Activated CD4-positive, alpha-beta T cell treated with anti-CD3 and anti-CD28 coated beads for 36 hours (primary cell): ENCODE measurements at regions of chr7 and their contacts with region 1.

Region 1: GRCh38 chr7:46288861-46289260 is 367.8 kb upstream of the IGFBP3 start:
- DNase-seq: no peak
- ATAC-seq: no peak
- H3K4me3 Mint-ChIP-seq: no peak overlapping the region
- H3K27ac Mint-ChIP-seq: no peak overlapping the region
- H3K4me1 Mint-ChIP-seq: no peaks in the 10 kb centered on the region
- H3K27me3 Mint-ChIP-seq: no peaks in the 10 kb centered on the region

Region 2: GRCh38 chr7:46649876-46650275 is 361.0 kb after region 1 on chr7:
- CTCF ChIA-PET with region 1: no interaction called
- POLR2A ChIA-PET with region 1: interaction called, 14 read pairs
- intact Hi-C with region 1: no loop called
- DNase-seq: no peak
- ATAC-seq: no peak
- H3K4me3 Mint-ChIP-seq: no peak overlapping the region
- H3K27ac Mint-ChIP-seq: no peak overlapping the region
- H3K4me1 Mint-ChIP-seq: no peaks in the 10 kb centered on the region
- H3K27me3 Mint-ChIP-seq: no peaks in the 10 kb centered on the region

Region 3: GRCh38 chr7:47285860-47286522 is 997.1 kb after region 1 on chr7:
- CTCF ChIA-PET with region 1: no interaction called
- POLR2A ChIA-PET with region 1: no interaction called
- intact Hi-C with region 1: no loop called
- DNase-seq: no peak
- ATAC-seq: no peak
- H3K4me3 Mint-ChIP-seq: no peak overlapping the region
- H3K27ac Mint-ChIP-seq: no peak overlapping the region
- H3K4me1 Mint-ChIP-seq: peaks cover 6% of the 10 kb centered on the region
- H3K27me3 Mint-ChIP-seq: peaks cover 4% of the 10 kb centered on the region